Adrenal gland (tissue), 19 donors: ENCODE measurements at regions of chr1 and their contacts with region 1.

Region 1: DNA sequence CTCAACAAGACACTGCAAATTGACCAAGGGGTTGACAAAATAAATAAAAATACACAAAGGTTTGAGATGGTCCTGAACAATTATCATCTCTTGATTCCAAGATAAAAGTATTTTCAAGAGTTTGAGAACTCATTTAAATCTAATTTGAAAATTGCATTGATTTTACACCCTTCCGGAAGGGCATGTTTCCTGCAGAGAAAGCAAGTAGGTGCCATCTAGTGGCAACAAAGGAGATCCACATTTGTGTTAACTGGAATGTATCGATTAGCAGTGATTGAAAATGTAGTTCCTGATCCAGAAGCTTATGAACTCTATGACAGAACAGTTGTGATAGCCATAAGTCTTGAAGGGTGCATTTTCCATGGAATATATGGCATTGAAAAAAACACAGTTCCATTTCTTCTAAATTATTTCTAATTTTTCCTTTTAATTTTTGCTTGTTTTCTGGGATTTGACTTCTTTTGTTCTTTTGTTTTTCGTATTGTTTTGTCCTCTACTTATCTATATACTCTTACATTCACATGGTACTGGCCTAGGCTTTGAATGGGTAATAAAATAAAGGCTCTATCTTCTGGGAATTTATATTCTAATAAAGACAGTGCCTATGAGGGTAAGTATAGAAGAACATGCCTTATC is 143.7 kb downstream of the DNM3 start:
- DNase-seq: no peak
- H3K4me3 ChIP-seq: no peak overlapping the region
- H3K27ac ChIP-seq: no peak overlapping the region
- H3K4me1 ChIP-seq: peaks cover 8 to 15% of the 10 kb centered on the region in 2 donors
- H3K27me3 ChIP-seq: no peaks in the 10 kb centered on the region
- CTCF ChIP-seq: peak; percentile 64 to 87 (median 79)
- POLR2A ChIP-seq: no peak

Region 2: GRCh38 chr1:171644805-171645483 is 340.0 kb before region 1 on chr1:
- intact Hi-C with region 1: loop called in 1 of 2 experiments (anchors 10 kb)
- DNase-seq: peak; percentile 82 to 95 (median 84)
- H3K4me3 ChIP-seq: no peak overlapping the region
- H3K27ac ChIP-seq: peak overlapping the region in 4 of 5 donors; percentile 33 to 78 (median 57)
- H3K4me1 ChIP-seq: peaks cover 12 to 13% of the 10 kb centered on the region in 2 donors
- H3K27me3 ChIP-seq: no peaks in the 10 kb centered on the region
- CTCF ChIP-seq: peak; percentile 75 to 83 (median 80)
- POLR2A ChIP-seq: no peak

Region 3: DNA sequence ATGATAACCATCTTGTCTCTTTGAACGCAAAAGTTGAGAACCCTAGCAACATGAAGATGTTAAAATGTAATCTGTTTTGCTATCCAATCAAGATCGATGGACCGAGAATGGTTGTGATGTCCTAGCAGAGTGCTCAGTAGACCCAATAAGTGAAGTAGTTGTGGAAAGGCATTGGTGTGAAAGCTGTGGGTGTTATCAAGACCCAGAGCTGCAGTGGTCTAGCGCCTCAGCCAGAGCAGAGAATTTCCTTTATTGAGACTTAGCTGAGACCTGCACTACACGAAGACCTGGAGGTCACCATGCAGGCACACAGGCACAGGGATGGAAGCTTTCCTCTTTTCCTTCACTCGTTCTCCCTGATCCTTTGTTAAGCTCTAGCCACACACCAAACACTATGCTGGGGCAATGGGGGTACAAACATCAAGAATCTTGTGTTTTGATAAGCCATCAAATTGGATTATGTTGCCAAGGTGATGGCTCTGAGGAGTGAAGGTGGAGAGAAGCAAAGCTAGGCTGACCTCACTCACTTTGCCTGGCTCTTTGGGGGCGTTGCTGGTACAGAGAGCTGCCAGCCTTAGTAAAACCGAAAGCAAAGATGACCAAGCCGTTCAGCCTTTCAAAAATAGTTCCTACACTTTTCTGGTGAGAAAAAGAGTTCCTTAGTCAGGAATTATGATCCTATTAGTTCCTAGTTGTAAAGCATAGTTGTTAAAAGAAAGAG is 179.4 kb before region 1 on chr1:
- intact Hi-C with region 1: loop called (anchors 2 kb)
- DNase-seq: peak in 6 of 7 donors; percentile 30 to 70 (median 44)
- H3K4me3 ChIP-seq: peak overlapping the region in 1 of 4 donors; percentile 31
- H3K27ac ChIP-seq: peak overlapping the region in 3 of 5 donors; percentile 10 to 37 (median 29)
- H3K4me1 ChIP-seq: peaks cover 0 to 14% of the 10 kb centered on the region in 2 donors
- H3K27me3 ChIP-seq: no peaks in the 10 kb centered on the region
- CTCF ChIP-seq: no peak
- POLR2A ChIP-seq: no peak